ENCODE measurements at regions of chr2 and their contacts with region 1.

Region 1: DNA sequence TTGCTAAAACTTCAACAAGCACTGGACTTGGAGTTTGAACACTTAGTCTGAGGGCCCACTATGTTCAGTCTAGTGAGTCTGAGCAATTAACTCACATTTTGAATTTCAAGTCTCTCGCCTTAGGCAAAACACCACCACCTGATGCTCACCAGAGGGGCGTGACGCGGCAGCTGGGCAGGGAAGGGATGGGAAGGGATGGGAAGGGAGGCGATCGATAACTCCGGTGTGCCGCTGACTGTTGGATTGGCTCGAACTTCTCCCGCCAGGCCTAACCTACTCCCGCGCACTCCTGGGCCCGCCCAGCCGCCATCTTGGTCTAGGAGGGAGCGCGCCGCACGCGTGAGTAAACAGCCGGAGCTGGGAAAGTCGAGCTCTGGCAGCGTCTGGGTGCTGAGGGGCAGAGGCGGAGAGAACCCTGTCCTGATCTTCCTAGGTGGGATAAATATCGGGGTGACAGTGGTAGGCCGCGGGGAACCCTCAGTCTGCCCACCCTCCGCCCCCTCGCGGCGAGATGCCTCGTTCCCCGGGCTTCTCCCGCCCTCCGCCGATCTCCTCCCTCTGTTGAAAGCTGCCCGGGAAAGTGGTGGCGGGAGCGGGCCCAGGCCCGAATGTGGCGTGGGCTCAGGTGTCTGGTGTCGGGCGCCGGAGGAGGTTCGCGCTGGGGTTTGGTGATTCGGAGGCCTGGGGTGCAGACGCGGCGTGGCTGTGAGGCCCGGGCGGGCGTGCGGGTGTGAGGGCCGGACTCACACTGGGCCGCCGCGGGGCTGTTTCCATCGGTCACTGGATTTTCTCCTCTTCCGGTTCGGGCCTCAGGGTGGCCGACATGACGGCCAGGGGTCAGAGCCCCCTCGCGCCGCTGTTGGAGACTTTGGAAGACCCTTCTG is at the start of gene RIF1:
- DNase-seq: peak; percentile 81
- H3K4me3 ChIP-seq: peak within 1 kb of the TSS; percentile 65 to 96
- H3K27ac ChIP-seq: peak within 1 kb of the TSS; percentile 94 to 96
- H3K4me1 ChIP-seq: no peaks in the 10 kb centered on the region
- H3K27me3 ChIP-seq: no peaks in the 10 kb centered on the region
- CTCF ChIP-seq: peak; percentile 11 to 77 (median 48)
- POLR2A ChIP-seq: no peak
- total RNA-seq, gene RIF1: 28.1 to 38.2 TPM

Region 2: DNA sequence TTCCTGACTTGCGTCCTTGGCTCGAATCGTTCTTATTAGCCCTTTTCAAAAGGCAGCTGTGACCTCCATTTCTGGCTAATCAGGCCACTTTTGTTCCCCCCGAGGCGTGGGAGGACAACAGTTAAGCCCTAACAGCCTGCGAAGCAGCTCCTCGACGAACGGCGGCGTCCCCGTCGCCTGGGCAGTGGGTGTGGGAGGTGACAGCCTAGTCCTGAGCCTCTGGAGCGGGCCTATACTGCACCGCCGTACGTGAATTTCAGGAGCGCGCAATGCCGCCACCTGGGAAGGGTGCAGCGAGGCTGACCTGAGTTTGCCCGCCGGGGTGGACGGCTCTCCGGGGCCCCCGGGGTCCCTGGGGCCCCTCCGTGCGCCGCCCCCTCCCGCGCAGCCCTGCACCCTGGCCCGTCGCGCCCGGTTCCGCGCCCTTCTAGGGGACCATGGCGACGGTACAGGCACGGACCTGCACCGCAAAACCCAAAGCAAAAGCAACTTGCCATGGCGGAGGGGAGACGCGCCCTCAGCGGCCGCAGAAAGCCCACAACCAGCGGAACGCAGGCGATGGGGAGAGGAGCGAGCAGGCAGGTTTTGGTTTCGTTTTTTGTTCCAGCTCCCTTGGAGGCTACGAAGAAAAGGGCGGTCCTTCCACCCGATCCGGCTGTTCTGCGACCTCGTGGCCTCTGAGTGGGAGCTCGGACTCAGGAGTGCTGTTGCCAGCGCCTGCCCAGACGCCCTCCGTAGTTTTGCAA is 148.4 kb before region 1 on chr2 and contains the start of gene RBM43:
- intact Hi-C with region 1: loop called (anchors 10 kb)
- DNase-seq: peak; percentile 65
- H3K4me3 ChIP-seq: peak within 1 kb of the TSS; percentile 71 to 90
- H3K27ac ChIP-seq: peak within 1 kb of the TSS; percentile 87 to 94
- H3K4me1 ChIP-seq: no peaks in the 10 kb centered on the region
- H3K27me3 ChIP-seq: no peaks in the 10 kb centered on the region
- CTCF ChIP-seq: peak in 2 of 4 experiments; percentile 3 to 11
- POLR2A ChIP-seq: peak; percentile 36
- total RNA-seq, gene RBM43: 6.2 to 6.4 TPM

Region 3: GRCh38 chr2:151669585-151670081 is 259.8 kb after region 1 on chr2:
- intact Hi-C with region 1: no loop called
- DNase-seq: no peak
- H3K4me3 ChIP-seq: no peak overlapping the region
- H3K27ac ChIP-seq: no peak overlapping the region
- H3K4me1 ChIP-seq: no peaks in the 10 kb centered on the region
- H3K27me3 ChIP-seq: no peaks in the 10 kb centered on the region
- CTCF ChIP-seq: no peak
- POLR2A ChIP-seq: no peak

Measured in prostate gland (tissue), 2 donors.